ENCODE measurements at regions of chr11 and their contacts with region 1.

Region 1: DNA sequence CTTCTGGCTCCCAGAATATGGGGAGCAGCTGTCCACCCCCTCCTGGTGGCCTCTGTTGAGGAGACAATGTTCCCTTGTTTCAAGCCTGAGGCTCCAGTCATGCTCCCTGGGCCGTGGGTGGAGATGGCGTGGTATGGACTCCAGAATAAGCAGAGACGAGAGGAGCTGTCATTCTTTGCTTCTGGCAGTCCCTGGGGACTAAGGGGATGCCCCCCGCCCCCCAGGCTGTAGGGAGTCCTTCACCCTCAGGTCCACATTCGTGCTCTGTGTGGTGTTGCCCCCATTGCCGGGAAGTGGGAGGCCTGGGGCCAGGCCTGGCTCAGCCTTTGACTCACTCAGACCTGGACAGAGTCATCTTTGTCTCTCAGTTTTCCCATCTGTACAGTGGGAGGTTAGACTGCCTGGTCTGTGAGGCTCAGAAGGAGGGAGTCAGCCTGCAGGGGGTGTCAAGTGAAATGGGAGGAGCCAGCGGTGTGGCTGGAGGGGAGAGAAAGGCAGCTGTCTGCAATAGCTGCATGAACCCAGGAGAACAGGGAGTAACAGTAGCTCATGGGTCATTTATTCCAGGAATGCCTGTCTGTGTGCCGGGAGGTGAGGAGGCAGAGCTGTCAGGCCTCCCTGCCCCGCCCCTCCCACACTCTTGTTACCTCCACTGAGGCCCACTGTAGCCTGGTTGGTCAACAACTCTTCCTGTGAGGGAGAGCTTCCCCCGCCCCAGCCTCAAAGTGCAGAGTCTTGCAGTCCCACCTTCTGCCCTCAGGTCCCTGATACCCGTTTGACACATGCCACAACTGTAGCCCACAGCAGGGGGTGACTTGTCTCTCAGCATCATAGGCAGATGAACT is 6.3 kb downstream of the ARHGEF17 start:
- DNase-seq: peak; percentile 95
- ATAC-seq: peak; percentile 89
- H3K4me3 ChIP-seq: peak overlapping the region in 1 of 3 experiments; percentile 55; a peak in 1 of 6 replicates
- H3K27ac ChIP-seq: peak overlapping the region; percentile 59
- H3K4me1 ChIP-seq: peaks cover 95% of the 10 kb centered on the region
- H3K27me3 ChIP-seq: no peaks in the 10 kb centered on the region
- CTCF ChIP-seq: peak; percentile 40
- EP300 ChIP-seq: peak in 1 of 2 experiments; percentile 48; a peak in 1 of 4 replicates
- POLR2A ChIP-seq: 0 out of 4 replicates have a peak, but pooled peaks of 1 of the 2 experiments have one; percentile 37
- RAD21 ChIP-seq: no peak; the same call in none of the 2 replicates

Region 2: DNA sequence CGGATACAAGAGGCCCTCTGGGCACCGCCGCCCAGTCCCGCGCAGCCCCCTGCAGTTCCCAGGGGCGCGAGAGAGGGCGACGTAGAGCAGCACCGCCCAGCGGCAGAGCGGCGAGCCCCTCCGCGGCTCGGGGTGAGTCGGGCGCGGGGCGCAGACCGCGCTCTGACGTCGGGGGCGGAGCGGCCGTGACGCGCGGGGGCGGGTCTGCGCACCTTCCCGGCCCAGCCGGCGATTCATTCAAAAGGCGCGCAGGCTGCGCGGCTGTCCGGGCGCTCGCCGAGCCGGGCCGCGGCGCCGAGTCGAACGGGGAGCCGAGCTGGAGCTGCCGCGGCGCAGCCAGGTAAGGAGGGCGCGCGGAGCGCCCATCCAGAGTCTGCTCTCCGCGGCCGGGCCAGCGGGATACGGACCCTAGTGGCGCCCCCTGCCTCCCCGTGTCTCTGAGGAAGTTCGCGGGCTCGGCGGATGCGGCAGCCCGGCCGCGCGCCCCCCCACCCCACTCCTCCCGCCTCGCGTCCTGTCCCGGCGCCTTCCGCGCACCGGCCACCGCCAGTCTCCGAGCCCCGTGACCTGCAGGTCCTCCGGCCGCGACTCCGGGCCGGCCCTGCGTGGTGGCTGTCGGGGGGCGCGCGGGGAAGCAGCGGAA is 61.9 kb after region 1 on chr11 and contains the start of gene RELT:
- CTCF ChIA-PET with region 1: no interaction called
- POLR2A ChIA-PET with region 1: interaction called, 8 read pairs
- in situ Hi-C with region 1: no loop called
- intact Hi-C with region 1: loop called (anchors 2 kb)
- DNase-seq: peak; percentile 73
- ATAC-seq: peak; percentile 75
- H3K4me3 ChIP-seq: peak within 1 kb of the TSS; percentile 73 to 87 (median 79)
- H3K27ac ChIP-seq: peak within 1 kb of the TSS; percentile 51
- H3K4me1 ChIP-seq: peaks cover 43% of the 10 kb centered on the region
- H3K27me3 ChIP-seq: peaks cover 0 to 7% of the 10 kb centered on the region in 2 experiments; a peak in 1 of 5 replicates
- CTCF ChIP-seq: peak; percentile 85
- EP300 ChIP-seq: no peak
- POLR2A ChIP-seq: peak; percentile 91 to 96
- RAD21 ChIP-seq: peak; percentile 57; the same call in 1 of the 2 replicates
- total RNA-seq, gene RELT: 1.6 and 4.7 TPM in 2 replicates